ENCODE measurements at regions of chr10 and their contacts with region 1.

Region 1: GRCh38 chr10:125160856-125161706 is 718 bp upstream of the CTBP2 start:
- DNase-seq: peak; percentile 81 to 89 (median 83)
- ATAC-seq: peak; percentile 56 to 78 (median 74)
- H3K4me3 ChIP-seq: peak overlapping the region; percentile 72 to 98 (median 90)
- H3K27ac ChIP-seq: peak overlapping the region; percentile 89 to 99 (median 98)
- H3K4me1 ChIP-seq: peaks cover 3 to 35% (median 25%) of the 10 kb centered on the region in 12 donors
- H3K27me3 ChIP-seq: no peaks in the 10 kb centered on the region
- CTCF ChIP-seq: peak; percentile 28 to 65 (median 52)
- POLR2A ChIP-seq: peak in 1 of 2 donors; percentile 51

Region 2: DNA sequence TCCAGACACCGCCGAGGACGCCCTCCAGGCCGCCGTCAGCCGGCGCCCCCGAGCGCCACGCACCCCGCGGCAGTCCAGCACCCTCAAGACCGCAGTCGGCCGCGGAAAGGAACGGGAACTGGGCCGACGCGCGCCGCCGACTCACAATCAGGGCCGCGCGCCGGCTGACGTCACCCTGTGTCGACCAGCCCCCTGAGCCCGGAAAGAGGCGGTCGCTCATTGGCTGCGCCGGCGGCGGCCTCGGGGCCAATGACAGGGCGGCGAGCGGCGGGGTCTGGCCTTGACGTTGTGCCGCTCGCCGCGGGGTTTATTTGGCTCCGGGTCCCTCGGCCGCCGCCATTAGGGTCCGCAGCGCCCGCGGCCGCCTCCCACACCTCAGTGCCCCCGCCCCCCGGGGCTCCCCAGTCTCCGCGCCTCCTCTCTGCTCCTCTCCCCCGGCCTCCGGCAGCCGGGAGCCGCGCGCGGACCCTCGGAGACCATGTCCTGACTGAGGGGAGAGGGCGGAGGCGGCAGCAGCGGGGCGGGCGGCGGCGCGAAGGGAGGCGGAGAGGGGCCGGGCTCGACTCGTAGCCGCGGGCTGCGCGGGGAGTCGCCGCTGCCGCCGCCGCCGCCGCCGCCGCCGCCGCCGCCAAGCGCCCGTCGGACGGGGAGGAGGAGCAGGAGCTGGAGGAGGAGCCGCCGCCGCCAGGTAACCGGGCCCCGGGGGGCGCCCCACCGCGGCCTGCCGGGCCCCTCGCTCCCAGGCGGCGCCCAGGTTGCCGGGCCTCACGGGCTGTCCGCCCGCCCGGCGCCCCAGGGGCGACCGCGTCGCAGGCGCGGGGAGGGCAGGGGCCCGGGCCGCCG is 244.3 kb before region 1 on chr10:
- intact Hi-C with region 1: loop called in 2 of 10 experiments (anchors 5 to 10 kb)
- DNase-seq: peak; percentile 99 to 100 (median 99)
- ATAC-seq: peak; percentile 98 to 99 (median 98)
- H3K4me3 ChIP-seq: peak overlapping the region; percentile 80 to 97 (median 88)
- H3K27ac ChIP-seq: peak overlapping the region; percentile 92 to 99 (median 96)
- H3K4me1 ChIP-seq: peaks cover 5 to 52% (median 40%) of the 10 kb centered on the region in 12 donors
- H3K27me3 ChIP-seq: no peaks in the 10 kb centered on the region
- CTCF ChIP-seq: peak in 1 of 12 donors; percentile 5
- POLR2A ChIP-seq: peak; percentile 85 to 98

Region 3: GRCh38 chr10:125048101-125048864 is 112.8 kb before region 1 on chr10:
- intact Hi-C with region 1: loop called in 2 of 10 experiments (anchors 5 kb)
- DNase-seq: peak; percentile 83 to 93 (median 90)
- ATAC-seq: peak; percentile 91 to 95 (median 94)
- H3K4me3 ChIP-seq: no peak overlapping the region
- H3K27ac ChIP-seq: peak overlapping the region in 8 of 12 donors; percentile 1 to 50 (median 35)
- H3K4me1 ChIP-seq: peaks cover 6 to 82% (median 49%) of the 10 kb centered on the region in 12 donors
- H3K27me3 ChIP-seq: no peaks in the 10 kb centered on the region
- CTCF ChIP-seq: peak; percentile 96 to 99 (median 98)
- POLR2A ChIP-seq: no peak

Region 4: DNA sequence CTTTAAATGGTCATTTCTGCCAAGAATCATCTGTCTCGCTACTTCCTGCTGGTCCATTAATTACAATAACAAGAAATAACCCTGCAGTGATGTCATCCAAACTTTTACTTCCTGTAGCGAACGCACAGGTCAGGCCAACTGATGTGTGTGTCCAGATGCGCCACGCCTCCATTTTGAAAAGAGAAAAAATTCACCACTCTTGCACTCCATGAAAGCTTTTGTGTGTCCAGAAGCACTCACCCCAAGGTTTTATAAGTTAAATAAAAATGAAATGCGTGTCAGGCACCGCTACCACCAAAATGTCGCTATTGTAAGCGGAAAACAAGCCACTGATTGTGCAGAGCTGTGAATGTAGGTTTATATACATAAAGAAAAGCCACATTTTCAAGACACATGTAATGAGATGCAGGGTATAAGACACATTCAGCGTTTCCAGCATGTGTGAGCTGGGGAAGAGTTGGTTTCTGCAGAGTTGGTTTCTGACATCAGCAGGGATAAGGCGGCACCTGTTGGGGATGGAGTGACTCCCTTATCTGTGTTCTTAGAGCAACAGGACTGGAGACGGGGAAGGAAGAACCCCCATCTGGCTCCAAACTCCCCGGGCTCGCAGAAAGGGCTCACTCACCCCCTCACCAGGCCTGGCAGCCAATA is 84.1 kb before region 1 on chr10:
- intact Hi-C with region 1: loop called in 2 of 10 experiments (anchors 5 kb)
- DNase-seq: no peak
- ATAC-seq: peak in 2 of 4 donors; percentile 22 to 79
- H3K4me3 ChIP-seq: no peak overlapping the region
- H3K27ac ChIP-seq: peak overlapping the region in 11 of 12 donors; percentile 20 to 75 (median 45)
- H3K4me1 ChIP-seq: peaks cover 0 to 54% (median 21%) of the 10 kb centered on the region in 12 donors
- H3K27me3 ChIP-seq: no peaks in the 10 kb centered on the region
- CTCF ChIP-seq: no peak
- POLR2A ChIP-seq: no peak

Region 5: DNA sequence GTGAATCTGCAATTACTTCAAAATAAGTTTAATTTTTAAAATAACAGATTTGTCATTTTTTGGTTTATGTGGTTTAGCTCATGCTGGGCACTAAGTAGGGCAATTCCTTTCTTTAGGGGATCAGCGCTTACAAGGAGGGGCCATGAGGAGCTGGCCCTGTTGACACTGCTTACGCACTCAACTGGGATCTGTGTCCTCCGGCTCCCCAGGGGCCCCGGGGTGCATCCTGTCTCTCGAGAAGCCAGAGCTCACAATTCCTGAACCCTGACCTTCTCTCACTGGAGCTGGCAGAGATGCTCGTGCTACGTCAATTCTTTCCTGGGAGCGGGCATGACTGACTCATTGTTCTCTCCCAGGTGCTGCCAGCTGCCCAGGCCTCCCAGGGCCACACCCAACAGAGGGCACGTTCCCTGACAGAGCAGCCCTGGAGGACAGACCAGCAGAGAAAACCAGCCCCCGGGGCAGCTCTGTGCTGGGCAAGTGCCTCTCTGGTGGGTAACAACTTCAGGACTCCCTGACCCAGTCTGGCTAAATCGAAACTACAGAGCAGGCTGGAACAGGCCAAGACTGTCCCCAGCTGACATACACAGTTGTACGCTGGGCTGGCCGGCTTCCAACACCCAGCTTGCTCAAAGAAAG is 37.5 kb before region 1 on chr10:
- intact Hi-C with region 1: loop called in 3 of 10 experiments (anchors 5 kb)
- DNase-seq: peak; percentile 84 to 95 (median 89)
- ATAC-seq: peak; percentile 76 to 93 (median 88)
- H3K4me3 ChIP-seq: peak overlapping the region in 9 of 12 donors; percentile 6 to 39 (median 26)
- H3K27ac ChIP-seq: peak overlapping the region; percentile 44 to 88 (median 82)
- H3K4me1 ChIP-seq: peaks cover 7 to 98% (median 74%) of the 10 kb centered on the region in 12 donors
- H3K27me3 ChIP-seq: no peaks in the 10 kb centered on the region
- CTCF ChIP-seq: peak in 1 of 12 donors; percentile 19
- POLR2A ChIP-seq: no peak

Region 6: GRCh38 chr10:125343118-125343925 is 182.2 kb after region 1 on chr10:
- intact Hi-C with region 1: loop called in 8 of 10 experiments (anchors 5 to 10 kb)
- DNase-seq: no peak
- ATAC-seq: peak in 1 of 4 donors; percentile 7
- H3K4me3 ChIP-seq: no peak overlapping the region
- H3K27ac ChIP-seq: no peak overlapping the region
- H3K4me1 ChIP-seq: no peaks in the 10 kb centered on the region
- H3K27me3 ChIP-seq: peaks cover 0 to 3% (median 0%) of the 10 kb centered on the region in 9 donors
- CTCF ChIP-seq: peak; percentile 48 to 76 (median 60)
- POLR2A ChIP-seq: no peak